Gastrocnemius medialis (tissue), 4 donors: ENCODE measurements at regions of chr3 and their contacts with region 1.

Region 1: GRCh38 chr3:69819282-69819681 is 80.0 kb downstream of the MITF start:
- DNase-seq: peak; percentile 19 to 55
- ATAC-seq: peak; percentile 82 to 96
- H3K4me3 ChIP-seq: no peak overlapping the region
- H3K27ac ChIP-seq: peak overlapping the region in 2 of 4 donors; percentile 13 to 44
- H3K4me1 ChIP-seq: peaks cover 76% of the 10 kb centered on the region in 2 donors
- H3K27me3 ChIP-seq: no peaks in the 10 kb centered on the region
- CTCF ChIP-seq: no peak
- POLR2A ChIP-seq: no peak

Region 2: GRCh38 chr3:69579306-69580041 is 239.8 kb before region 1 on chr3:
- in situ Hi-C with region 1: no loop called
- intact Hi-C with region 1: no loop called
- DNase-seq: no peak
- ATAC-seq: no peak
- H3K4me3 ChIP-seq: no peak overlapping the region
- H3K27ac ChIP-seq: no peak overlapping the region
- H3K4me1 ChIP-seq: peaks cover 0 to 7% of the 10 kb centered on the region in 2 donors
- H3K27me3 ChIP-seq: no peaks in the 10 kb centered on the region
- CTCF ChIP-seq: no peak
- POLR2A ChIP-seq: no peak

Region 3: GRCh38 chr3:69761896-69762767 is 57.1 kb before region 1 on chr3:
- in situ Hi-C with region 1: no loop called
- intact Hi-C with region 1: no loop called
- DNase-seq: no peak
- ATAC-seq: peak in 1 of 2 donors; percentile 15
- H3K4me3 ChIP-seq: no peak overlapping the region
- H3K27ac ChIP-seq: peak overlapping the region; percentile 45 to 70 (median 54)
- H3K4me1 ChIP-seq: peaks cover 72 to 76% of the 10 kb centered on the region in 2 donors
- H3K27me3 ChIP-seq: no peaks in the 10 kb centered on the region
- CTCF ChIP-seq: no peak
- POLR2A ChIP-seq: no peak

Region 4: DNA sequence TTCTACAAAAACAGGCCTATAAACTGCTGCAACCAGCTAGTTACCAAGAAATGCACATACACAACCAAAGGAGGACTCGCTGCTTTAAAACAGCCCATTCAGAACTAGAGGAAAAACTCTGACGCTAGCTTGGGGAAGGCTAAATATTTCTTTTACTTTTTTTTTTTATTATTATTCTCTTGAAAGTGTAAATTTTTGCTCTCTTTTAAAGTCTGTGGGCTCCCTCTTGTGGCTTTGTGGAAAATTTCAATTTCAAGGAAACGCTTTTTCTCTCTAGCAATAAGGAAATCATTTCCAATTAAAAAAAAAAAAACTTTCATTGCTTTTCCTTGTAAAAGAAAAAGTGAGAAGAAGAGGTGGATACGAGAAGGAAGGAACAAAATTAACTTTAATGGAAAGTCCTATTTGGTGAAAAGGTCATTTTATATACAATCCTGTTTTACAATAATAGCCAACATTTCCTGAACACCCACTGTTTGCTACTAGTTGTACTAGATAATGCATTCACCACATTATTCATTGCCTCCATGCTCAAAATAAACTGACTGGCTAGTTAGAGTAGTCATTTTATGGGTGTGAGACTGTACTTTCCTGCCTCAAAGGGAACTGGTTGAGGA is 129.1 kb after region 1 on chr3:
- in situ Hi-C with region 1: no loop called
- intact Hi-C with region 1: loop called (anchors 10 kb)
- DNase-seq: no peak
- ATAC-seq: no peak
- H3K4me3 ChIP-seq: no peak overlapping the region
- H3K27ac ChIP-seq: no peak overlapping the region
- H3K4me1 ChIP-seq: no peaks in the 10 kb centered on the region
- H3K27me3 ChIP-seq: no peaks in the 10 kb centered on the region
- CTCF ChIP-seq: peak; percentile 15 to 65 (median 39)
- POLR2A ChIP-seq: no peak